ENCODE measurements at regions of chr17 and their contacts with region 1.

Region 1: DNA sequence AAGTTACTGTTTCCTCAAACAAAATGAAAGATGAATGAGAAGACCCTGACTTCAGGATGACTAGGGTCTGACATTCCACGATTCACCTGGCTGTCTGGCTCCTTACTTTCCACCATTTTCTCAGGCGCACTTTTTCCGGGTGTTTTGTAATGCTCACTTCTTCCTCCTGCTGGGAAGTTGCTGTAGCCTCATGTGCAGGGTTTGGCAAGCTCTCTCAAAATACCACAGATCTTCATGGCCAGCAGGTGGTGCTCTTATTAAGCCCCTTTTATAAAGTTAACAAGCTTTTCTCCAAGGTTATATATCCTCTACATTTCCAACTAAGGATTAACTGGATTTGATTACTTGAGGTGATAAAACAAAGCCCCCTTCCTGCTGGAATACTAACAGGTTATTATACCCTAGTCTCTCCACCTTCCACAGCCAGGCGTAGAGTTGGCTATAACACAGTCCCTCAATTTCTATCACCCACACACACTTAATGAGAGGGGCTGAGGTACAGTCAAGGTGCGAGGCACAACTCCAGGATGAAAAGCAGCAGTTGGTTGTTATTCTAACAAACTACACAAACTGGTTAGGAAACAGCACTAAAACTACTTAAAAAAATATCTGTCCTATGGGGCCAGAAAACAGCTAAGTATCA is 45.4 kb downstream of the STH start:
- DNase-seq: peak; percentile 80 to 84
- ATAC-seq: peak; percentile 86 to 89
- H3K4me3 ChIP-seq: no peak overlapping the region
- H3K27ac ChIP-seq: peak overlapping the region; percentile 65 to 77 (median 75)
- H3K4me1 ChIP-seq: peaks cover 39 to 50% of the 10 kb centered on the region in 2 donors
- H3K27me3 ChIP-seq: no peaks in the 10 kb centered on the region
- CTCF ChIP-seq: peak; percentile 83 to 92 (median 89)
- POLR2A ChIP-seq: no peak

Region 2: DNA sequence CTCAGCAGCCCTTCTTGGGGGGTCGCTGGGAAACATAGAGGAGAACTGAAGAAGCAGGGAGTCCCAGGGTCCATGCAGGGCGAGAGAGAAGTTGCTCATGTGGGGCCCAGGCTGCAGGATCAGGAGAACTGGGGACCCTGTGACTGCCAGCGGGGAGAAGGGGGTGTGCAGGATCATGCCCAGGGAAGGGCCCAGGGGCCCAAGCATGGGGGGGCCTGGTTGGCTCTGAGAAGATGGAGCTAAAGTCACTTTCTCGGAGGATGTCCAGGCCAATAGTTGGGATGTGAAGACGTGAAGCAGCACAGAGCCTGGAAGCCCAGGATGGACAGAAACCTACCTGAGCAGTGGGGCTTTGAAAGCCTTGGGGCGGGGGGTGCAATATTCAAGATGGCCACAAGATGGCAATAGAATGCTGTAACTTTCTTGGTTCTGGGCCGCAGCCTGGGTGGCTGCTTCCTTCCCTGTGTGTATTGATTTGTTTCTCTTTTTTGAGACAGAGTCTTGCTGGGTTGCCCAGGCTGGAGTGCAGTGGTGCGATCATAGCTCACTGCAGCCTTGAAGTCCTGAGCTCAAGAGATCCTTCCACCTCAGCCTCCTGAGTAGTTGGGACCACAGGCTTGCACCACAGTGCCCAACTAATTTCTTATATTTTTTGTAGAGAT is 42.0 kb before region 1 on chr17:
- in situ Hi-C with region 1: loop called in 1 of 4 experiments (anchors 5 kb)
- intact Hi-C with region 1: loop called (anchors 1 kb)
- DNase-seq: peak; percentile 40 to 60
- ATAC-seq: peak; percentile 80 to 86
- H3K4me3 ChIP-seq: no peak overlapping the region
- H3K27ac ChIP-seq: peak overlapping the region in 3 of 4 donors; percentile 7 to 50 (median 8)
- H3K4me1 ChIP-seq: peaks cover 21 to 23% of the 10 kb centered on the region in 2 donors
- H3K27me3 ChIP-seq: no peaks in the 10 kb centered on the region
- CTCF ChIP-seq: peak; percentile 86 to 97 (median 96)
- POLR2A ChIP-seq: no peak

Region 3: DNA sequence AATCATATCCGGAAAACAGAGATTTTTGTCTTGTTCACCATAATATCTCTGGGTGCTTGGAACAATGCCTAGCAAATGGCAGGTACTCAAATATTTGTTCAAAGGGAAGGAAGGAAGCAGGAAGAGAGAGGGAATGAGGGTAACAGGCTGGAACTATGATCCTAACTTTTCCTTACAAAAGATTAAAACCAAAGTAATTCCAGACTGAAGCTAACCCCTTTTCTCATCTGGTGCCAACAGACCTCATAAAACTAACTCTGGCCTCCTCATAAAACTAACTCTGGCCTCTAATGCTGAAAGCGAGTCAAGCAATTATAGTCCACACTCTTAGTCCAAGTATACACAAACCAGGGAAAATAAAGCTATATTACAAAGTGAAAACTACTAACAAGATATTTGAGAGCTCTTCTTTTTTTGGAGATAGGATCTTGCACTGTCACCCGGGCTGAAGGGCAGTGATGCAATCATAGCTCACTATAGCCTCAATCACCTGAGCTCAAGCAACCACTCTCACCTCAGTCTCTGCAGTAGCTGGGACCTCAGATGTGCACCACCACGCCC is 64.2 kb after region 1 on chr17:
- in situ Hi-C with region 1: no loop called
- intact Hi-C with region 1: no loop called
- DNase-seq: peak in 1 of 2 donors; percentile 54
- ATAC-seq: peak; percentile 78 to 89
- H3K4me3 ChIP-seq: no peak overlapping the region
- H3K27ac ChIP-seq: peak overlapping the region; percentile 56 to 76 (median 62)
- H3K4me1 ChIP-seq: peaks cover 59 to 65% of the 10 kb centered on the region in 2 donors
- H3K27me3 ChIP-seq: no peaks in the 10 kb centered on the region
- CTCF ChIP-seq: no peak
- POLR2A ChIP-seq: no peak

Measured in gastrocnemius medialis (tissue), 4 donors.